ENCODE measurements at regions of chr1 and their contacts with region 1.

Region 1: GRCh38 chr1:32876341-32877210 is 5.9 kb upstream of the FNDC5 start:
- DNase-seq: peak; percentile 74
- ATAC-seq: peak; percentile 84
- H3K4me3 Mint-ChIP-seq: no peak overlapping the region
- H3K27ac Mint-ChIP-seq: no peak overlapping the region
- H3K4me1 Mint-ChIP-seq: peaks cover 3% of the 10 kb centered on the region
- H3K27me3 Mint-ChIP-seq: peaks cover 35% of the 10 kb centered on the region
- CTCF ChIP-seq: peak; percentile 90

Region 2: DNA sequence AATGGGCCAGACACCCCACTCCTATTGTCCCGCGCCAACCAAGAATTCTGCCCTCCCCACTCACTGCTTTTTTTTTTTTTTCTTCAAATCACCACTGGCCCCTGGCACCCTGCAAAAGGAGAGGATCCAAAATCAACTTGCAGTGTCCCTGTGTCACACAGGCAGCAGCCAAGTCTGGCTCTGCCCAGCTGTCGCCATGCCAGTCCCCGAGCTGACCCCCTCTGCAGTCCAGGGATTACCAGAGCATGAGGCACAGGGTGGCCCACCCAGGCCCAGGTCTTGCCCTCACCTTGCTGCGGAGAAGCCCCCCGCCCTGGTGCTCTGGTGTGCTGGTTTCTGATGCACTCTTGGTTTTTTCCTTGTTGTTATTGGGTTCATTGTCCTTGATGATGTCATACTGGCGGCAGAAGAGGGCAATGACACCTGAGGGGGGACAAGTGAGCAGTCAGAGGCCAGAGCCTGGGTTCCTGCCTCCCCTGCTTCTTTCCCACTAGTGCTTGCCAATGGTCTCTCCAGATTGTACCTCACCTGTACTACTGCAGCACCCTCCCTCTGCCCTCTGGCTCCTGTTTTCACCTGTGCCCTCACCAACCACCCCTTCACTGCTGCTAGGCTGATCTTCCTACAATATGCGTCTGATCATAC is 12.1 kb before region 1 on chr1:
- CTCF ChIA-PET with region 1: interaction called, 14 read pairs
- POLR2A ChIA-PET with region 1: interaction called, 3 read pairs
- intact Hi-C with region 1: no loop called
- DNase-seq: no peak
- ATAC-seq: no peak
- H3K4me3 Mint-ChIP-seq: no peak overlapping the region
- H3K27ac Mint-ChIP-seq: no peak overlapping the region
- H3K4me1 Mint-ChIP-seq: no peaks in the 10 kb centered on the region
- H3K27me3 Mint-ChIP-seq: peaks cover 5% of the 10 kb centered on the region
- CTCF ChIP-seq: no peak

Region 3: GRCh38 chr1:32892368-32893197 is 16.0 kb after region 1 on chr1:
- CTCF ChIA-PET with region 1: interaction called, 31 read pairs
- POLR2A ChIA-PET with region 1: interaction called, 3 read pairs
- intact Hi-C with region 1: no loop called
- DNase-seq: peak; percentile 75
- ATAC-seq: peak; percentile 93
- H3K4me3 Mint-ChIP-seq: peak overlapping the region; percentile 51
- H3K27ac Mint-ChIP-seq: no peak overlapping the region
- H3K4me1 Mint-ChIP-seq: peaks cover 5% of the 10 kb centered on the region
- H3K27me3 Mint-ChIP-seq: peaks cover 51% of the 10 kb centered on the region
- CTCF ChIP-seq: peak; percentile 86

Region 4: DNA sequence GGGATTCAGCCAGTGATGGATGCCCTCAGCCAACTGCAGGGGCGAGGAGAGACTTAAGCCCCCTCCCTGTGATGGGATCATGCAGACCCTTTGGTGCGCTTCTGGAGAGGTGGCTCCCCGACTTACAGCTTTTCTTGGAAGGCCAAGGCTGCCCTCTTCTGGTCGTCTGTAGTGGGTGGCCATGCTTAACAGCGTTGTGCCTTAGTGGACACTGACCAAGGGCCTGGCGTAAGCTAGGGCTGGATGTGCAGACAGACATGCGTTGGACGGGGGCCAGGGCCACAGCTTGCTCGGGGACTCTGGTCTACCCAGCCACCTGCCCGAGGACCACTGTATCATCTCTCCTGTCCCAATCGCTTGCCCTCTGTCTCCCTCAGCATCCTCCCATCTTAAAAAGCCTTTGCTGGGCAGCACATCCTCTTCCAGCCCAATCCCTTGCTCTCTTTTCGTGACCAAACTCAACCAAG is 209.8 kb after region 1 on chr1:
- CTCF ChIA-PET with region 1: interaction called, 25 read pairs
- POLR2A ChIA-PET with region 1: no interaction called
- intact Hi-C with region 1: no loop called
- DNase-seq: peak; percentile 70
- ATAC-seq: no peak
- H3K4me3 Mint-ChIP-seq: no peak overlapping the region
- H3K27ac Mint-ChIP-seq: no peak overlapping the region
- H3K4me1 Mint-ChIP-seq: peaks cover 29% of the 10 kb centered on the region
- H3K27me3 Mint-ChIP-seq: no peaks in the 10 kb centered on the region
- CTCF ChIP-seq: peak; percentile 61